Aorta (tissue), 5 donors: ENCODE measurements at regions of chr13 and their contacts with region 1.

Region 1: DNA sequence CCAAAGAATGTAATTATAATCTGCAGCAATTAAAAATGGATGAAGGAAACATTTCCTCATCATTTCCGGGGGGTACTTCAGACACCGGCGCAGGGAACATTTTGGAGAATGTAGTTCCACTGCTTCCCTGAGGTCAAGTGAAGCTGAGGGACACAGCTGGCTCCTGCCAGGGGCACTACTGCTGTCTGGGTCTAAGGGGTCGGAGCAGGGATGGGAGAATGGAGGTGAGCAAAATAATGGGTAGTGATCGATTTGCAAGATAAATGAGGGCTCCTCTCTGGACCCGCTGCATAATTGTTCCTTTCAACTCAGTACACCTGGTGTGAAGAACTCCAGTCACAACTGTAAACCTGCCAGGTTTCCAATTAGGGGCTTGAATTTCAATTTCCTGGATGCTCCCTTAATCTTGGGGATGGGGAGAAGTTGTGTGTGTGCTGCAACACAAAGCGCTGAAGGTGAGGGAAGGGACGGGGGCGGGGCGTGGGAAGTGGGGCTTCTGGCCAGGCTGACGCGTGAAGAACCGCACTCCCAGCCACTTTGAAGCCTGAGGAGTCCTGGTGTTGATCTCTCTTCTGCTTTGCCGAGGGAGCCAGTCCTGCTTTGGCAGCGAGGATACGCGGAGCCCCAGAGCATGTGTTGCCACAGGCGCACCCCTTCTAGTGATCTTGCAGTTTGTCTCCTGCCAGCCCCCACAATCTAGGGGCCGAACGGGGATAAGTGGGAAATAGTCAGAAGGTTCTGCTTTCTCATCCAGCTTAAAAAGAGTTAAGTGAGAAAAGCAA is 57.9 kb upstream of the PCDH8 start:
- DNase-seq: no peak
- ATAC-seq: no peak
- H3K4me3 ChIP-seq: no peak overlapping the region
- H3K27ac ChIP-seq: no peak overlapping the region
- H3K4me1 ChIP-seq: no peaks in the 10 kb centered on the region
- H3K27me3 ChIP-seq: no peaks in the 10 kb centered on the region

Region 2: GRCh38 chr13:52955472-52955874 is 49.2 kb after region 1 on chr13:
- intact Hi-C with region 1: loop called in 1 of 2 experiments (anchors 5 kb)
- DNase-seq: no peak
- ATAC-seq: no peak
- H3K4me3 ChIP-seq: no peak overlapping the region
- H3K27ac ChIP-seq: no peak overlapping the region
- H3K4me1 ChIP-seq: no peaks in the 10 kb centered on the region
- H3K27me3 ChIP-seq: peaks cover 0 to 6% of the 10 kb centered on the region in 2 donors